Gastrocnemius medialis (tissue), 4 donors: ENCODE measurements at regions of chr14 and their contacts with region 1.

Region 1: GRCh38 chr14:28751467-28752058 is 15.0 kb upstream of the FOXG1 start:
- DNase-seq: no peak
- ATAC-seq: no peak
- H3K4me3 ChIP-seq: no peak overlapping the region
- H3K27ac ChIP-seq: no peak overlapping the region
- H3K4me1 ChIP-seq: no peaks in the 10 kb centered on the region
- H3K27me3 ChIP-seq: peaks cover 22 to 31% (median 24%) of the 10 kb centered on the region in 3 donors
- CTCF ChIP-seq: no peak
- POLR2A ChIP-seq: no peak

Region 2: GRCh38 chr14:28613532-28613931 is 138.0 kb before region 1 on chr14:
- in situ Hi-C with region 1: no loop called
- intact Hi-C with region 1: no loop called
- DNase-seq: no peak
- ATAC-seq: no peak
- H3K4me3 ChIP-seq: no peak overlapping the region
- H3K27ac ChIP-seq: no peak overlapping the region
- H3K4me1 ChIP-seq: no peaks in the 10 kb centered on the region
- H3K27me3 ChIP-seq: no peaks in the 10 kb centered on the region
- CTCF ChIP-seq: no peak
- POLR2A ChIP-seq: no peak

Region 3: DNA sequence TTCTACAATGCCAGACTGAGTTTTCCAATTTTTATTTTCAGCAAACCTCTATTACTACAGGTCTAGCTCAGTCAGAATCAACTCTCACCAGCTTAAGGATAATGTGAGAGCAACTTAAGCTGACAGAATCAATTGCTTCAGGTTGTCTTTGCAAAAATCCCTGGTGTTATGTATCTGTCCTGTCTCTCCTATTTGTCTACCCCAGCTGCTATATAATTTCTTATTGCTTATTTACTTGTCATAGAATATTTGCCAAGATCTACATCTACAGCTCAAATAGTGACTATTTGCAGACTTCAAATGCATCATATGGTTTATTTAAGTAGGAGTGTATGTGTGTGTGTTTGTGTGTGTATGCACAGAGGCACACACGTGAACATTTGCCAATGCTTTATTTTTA is 69.1 kb after region 1 on chr14:
- in situ Hi-C with region 1: no loop called
- intact Hi-C with region 1: no loop called
- DNase-seq: no peak
- ATAC-seq: no peak
- H3K4me3 ChIP-seq: no peak overlapping the region
- H3K27ac ChIP-seq: no peak overlapping the region
- H3K4me1 ChIP-seq: no peaks in the 10 kb centered on the region
- H3K27me3 ChIP-seq: no peaks in the 10 kb centered on the region
- CTCF ChIP-seq: no peak
- POLR2A ChIP-seq: no peak

Region 4: GRCh38 chr14:29548948-29549370 is 797.4 kb after region 1 on chr14:
- in situ Hi-C with region 1: loop called in 2 of 4 experiments (anchors 25 kb)
- intact Hi-C with region 1: no loop called
- DNase-seq: no peak
- ATAC-seq: peak in 1 of 2 donors; percentile 60
- H3K4me3 ChIP-seq: no peak overlapping the region
- H3K27ac ChIP-seq: no peak overlapping the region
- H3K4me1 ChIP-seq: no peaks in the 10 kb centered on the region
- H3K27me3 ChIP-seq: no peaks in the 10 kb centered on the region
- CTCF ChIP-seq: peak; percentile 28 to 64 (median 44)
- POLR2A ChIP-seq: no peak